Dendritic cell treated with granulocyte-macrophage colony-stimulating factor and Interleukin-4, amounts not matched to agents 40 ng/mL and 50 ng/mL, for 4 days (primary cell): ENCODE measurements at regions of chr3 and their contacts with region 1.

Region 1: DNA sequence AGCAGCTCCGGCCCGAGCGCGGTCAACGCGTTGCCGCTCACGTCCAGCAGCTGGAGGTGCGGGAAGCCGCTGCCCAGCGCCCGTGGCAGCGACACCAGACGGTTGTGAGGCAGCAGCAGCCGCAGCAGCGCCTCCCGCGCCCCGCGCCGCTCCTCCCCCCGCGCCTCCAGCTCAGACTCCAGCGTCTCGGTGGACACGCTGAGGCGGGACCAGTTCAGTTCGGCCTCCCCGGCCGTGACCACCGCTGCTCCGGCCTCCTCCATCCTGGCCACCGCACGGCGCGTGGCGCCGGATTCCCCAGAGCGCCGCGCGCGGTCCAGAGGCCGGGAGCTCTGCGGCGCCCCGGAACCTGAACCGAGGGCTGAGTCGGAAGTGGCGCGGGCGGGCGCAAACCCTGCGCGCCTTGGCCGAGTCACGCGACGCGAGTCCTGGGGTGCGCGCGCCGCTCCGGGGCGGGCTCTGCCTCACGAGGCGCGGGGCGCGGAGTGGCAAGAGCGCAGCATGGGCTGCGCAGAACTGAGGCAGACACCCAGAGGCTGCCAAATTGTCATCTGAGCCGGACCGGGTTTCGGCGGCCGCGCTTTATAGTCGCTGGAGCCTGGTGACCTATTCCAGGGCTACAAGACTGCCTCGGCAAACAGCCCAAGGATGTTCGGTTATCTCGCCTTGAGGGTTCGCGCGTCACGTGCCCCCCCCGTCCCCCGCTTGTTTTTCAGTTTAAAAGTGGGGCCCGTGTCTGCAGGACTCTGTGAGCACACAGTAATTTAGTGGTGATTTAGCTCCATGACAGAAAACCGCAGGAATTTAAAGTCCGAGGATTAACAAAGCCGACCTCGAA is at the start of gene LRRC58:
- H3K4me3 Mint-ChIP-seq: peak within 1 kb of the TSS; percentile 79
- H3K27ac Mint-ChIP-seq: peak within 1 kb of the TSS; percentile 83
- H3K4me1 Mint-ChIP-seq: peaks cover 36% of the 10 kb centered on the region
- H3K27me3 Mint-ChIP-seq: no peaks in the 10 kb centered on the region

Region 2: GRCh38 chr3:119702530-119703157 is 646.6 kb before region 1 on chr3 and contains the start of gene CFAP91:
- intact Hi-C with region 1: loop called (anchors 10 kb)
- H3K4me3 Mint-ChIP-seq: peak within 1 kb of the TSS; percentile 65
- H3K27ac Mint-ChIP-seq: peak within 1 kb of the TSS; percentile 43
- H3K4me1 Mint-ChIP-seq: peaks cover 33% of the 10 kb centered on the region
- H3K27me3 Mint-ChIP-seq: peaks cover 16% of the 10 kb centered on the region

Region 3: GRCh38 chr3:120095226-120095978 is 253.8 kb before region 1 on chr3:
- intact Hi-C with region 1: loop called (anchors 2 kb)
- H3K4me3 Mint-ChIP-seq: no peak overlapping the region
- H3K27ac Mint-ChIP-seq: no peak overlapping the region
- H3K4me1 Mint-ChIP-seq: peaks cover 24% of the 10 kb centered on the region
- H3K27me3 Mint-ChIP-seq: no peaks in the 10 kb centered on the region

Region 4: DNA sequence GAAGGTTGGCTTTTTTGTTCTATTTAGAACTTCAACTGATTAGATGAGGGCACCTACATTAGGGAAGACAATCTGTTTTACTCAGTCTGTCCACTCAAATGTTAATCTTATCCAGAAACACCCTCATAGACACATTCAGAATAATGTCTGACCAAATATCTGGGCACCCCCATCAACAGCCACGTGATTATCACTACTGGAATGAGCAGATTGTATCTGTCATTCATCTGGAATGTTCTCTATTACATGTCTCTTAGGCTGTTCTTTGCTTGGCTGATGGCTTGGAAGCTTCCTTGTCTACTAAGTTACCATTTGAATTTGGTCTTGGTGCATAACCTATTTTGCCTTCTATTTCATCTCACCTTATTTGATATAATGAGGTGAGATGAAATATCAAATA is 15.6 kb after region 1 on chr3:
- intact Hi-C with region 1: no loop called
- H3K4me3 Mint-ChIP-seq: no peak overlapping the region
- H3K27ac Mint-ChIP-seq: no peak overlapping the region
- H3K4me1 Mint-ChIP-seq: no peaks in the 10 kb centered on the region
- H3K27me3 Mint-ChIP-seq: peaks cover 3% of the 10 kb centered on the region

Region 5: DNA sequence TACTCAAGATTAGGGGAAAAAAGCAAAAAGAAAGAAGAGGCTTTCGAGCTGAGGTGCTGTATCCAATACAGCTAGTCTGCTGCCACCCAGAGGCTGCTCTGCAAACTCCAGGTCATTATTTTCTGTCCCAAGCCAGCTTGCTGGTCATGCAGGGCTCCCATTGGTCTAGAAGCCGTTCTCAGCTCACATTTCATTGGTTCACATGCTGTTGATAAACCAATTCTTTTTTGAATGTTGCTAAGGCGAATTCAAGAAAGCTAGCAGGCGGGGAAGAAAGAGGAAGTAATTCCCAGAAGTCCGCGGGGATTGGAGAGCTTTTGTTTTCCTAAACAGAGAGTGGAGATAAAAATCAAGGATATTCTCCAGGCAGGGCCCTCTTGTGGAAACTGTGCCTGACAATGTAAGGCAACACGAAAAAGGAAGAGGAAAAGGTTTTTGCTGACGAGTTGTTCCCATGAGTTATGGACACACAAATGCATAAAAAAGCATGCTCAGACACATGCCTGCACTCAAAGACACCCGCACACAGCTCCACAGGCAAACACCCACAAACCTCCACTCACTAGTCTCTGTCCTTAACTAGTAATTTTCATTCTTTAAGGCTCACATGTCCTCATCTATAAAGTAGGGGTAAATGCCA is 68.2 kb after region 1 on chr3:
- intact Hi-C with region 1: loop called (anchors 2 kb)
- H3K4me3 Mint-ChIP-seq: peak overlapping the region; percentile 65
- H3K27ac Mint-ChIP-seq: peak overlapping the region; percentile 69
- H3K4me1 Mint-ChIP-seq: peaks cover 31% of the 10 kb centered on the region
- H3K27me3 Mint-ChIP-seq: peaks cover 10% of the 10 kb centered on the region

Region 6: DNA sequence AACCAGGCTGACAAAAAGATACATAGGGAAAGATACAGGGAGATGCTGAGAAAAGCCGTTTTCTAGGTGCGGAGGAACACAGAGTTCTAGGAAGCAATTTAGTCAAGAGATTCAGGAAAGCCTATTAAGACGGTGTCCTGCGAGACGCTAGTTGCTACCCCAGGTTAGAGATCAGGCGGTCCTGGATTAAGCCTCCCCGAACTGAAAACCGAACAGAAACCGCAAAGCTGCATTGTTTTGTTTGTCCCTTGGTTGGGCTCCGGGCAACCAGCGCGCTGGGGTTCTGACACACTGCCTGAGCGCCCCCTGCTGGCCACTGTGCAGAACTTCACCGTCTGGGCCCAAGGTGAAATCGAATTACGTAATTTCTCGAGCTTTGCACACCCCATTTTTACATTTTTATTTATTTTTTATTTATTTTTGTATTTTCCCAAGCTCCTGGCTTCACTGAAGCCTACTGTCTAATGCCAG is 209.6 kb after region 1 on chr3:
- intact Hi-C with region 1: loop called (anchors 10 kb)
- H3K4me3 Mint-ChIP-seq: peak overlapping the region; percentile 62
- H3K27ac Mint-ChIP-seq: peak overlapping the region; percentile 66
- H3K4me1 Mint-ChIP-seq: peaks cover 16% of the 10 kb centered on the region
- H3K27me3 Mint-ChIP-seq: peaks cover 5% of the 10 kb centered on the region

Region 7: DNA sequence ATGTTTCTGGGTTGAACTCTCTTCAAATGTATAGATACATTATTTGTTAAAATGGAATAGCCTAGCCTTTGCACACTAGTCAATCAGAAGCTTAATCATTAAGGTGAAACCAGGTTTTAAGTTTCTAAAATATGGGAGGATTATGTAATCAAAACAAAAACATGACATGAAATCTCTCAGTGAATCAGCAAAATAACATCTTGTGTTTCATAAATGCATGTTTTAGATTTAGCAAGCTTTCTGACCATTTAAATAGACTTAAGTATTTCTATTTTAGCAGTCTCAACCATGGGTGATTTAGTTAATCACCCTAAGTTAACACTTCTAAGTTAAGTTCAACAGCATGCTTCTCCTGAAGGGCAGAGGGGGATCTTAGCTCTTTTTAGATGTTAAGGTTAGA is 404.6 kb after region 1 on chr3:
- intact Hi-C with region 1: loop called (anchors 10 kb)
- H3K4me3 Mint-ChIP-seq: no peak overlapping the region
- H3K27ac Mint-ChIP-seq: no peak overlapping the region
- H3K4me1 Mint-ChIP-seq: peaks cover 19% of the 10 kb centered on the region
- H3K27me3 Mint-ChIP-seq: no peaks in the 10 kb centered on the region